ENCODE measurements at regions of chr14 and their contacts with region 1.

Region 1: DNA sequence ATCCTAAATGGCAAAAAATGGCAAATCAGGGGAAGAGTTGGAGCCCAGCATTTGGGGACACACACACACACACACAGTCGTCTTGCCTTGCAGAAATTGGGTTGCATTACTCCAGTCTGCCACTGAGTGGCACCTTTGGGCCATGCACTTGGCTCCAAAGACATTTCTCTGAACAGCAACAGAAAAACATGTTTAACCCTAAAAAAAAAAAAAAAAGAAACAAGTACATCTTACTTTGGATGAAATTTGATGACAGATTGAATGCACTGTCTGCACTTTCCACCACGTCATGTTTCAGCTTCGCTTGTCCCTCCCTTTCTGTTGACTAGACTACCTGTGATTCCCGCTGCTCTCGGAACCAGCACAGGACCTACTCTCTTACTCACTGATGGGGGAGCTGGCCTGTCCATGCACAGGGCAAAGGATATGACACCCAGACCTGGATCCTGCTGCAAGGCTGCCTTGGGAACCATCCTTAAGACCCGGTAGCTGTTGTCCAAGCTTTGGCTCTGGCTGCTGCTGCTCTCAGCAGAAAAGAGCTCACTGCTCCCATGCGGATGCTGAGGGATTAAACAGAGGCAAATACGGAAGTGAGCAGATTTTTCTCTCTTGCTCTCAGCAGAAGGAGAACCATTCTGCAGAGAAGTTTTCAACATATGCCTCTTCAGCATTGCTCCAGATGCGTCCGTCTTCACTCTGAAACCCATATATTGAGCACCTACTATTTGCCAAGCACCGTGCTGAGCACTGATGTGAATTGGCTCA is 376.8 kb downstream of the DPF3 start:
- DNase-seq: peak; percentile 83
- ATAC-seq: no peak
- H3K4me3 Mint-ChIP-seq: no peak overlapping the region
- H3K27ac Mint-ChIP-seq: no peak overlapping the region
- H3K4me1 Mint-ChIP-seq: peaks cover 54% of the 10 kb centered on the region
- H3K27me3 Mint-ChIP-seq: no peaks in the 10 kb centered on the region

Region 2: GRCh38 chr14:72380456-72380855 is 136.7 kb before region 1 on chr14:
- CTCF ChIA-PET with region 1: no interaction called
- POLR2A ChIA-PET with region 1: no interaction called
- intact Hi-C with region 1: no loop called
- DNase-seq: no peak
- ATAC-seq: no peak
- H3K4me3 Mint-ChIP-seq: no peak overlapping the region
- H3K27ac Mint-ChIP-seq: no peak overlapping the region
- H3K4me1 Mint-ChIP-seq: peaks cover 5% of the 10 kb centered on the region
- H3K27me3 Mint-ChIP-seq: peaks cover 14% of the 10 kb centered on the region

Region 3: DNA sequence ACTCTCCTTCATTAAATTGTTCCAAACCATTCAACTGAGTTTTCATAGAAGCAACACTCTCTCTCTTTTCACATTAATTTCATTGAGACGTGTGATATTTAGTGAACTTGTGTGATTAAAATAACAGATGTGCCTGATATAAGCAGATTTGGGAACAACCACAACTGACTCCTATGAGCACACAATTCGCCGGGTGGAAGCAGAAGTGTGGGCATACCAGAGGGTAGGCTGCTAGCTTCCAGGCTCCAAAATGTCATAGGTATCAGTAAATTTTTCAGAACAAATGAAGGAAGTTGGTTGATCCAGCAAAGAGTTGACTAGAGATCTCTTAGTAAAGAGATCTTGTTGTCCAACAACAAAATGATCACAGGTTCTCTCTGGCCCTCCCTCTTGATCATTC is 52.9 kb before region 1 on chr14:
- CTCF ChIA-PET with region 1: no interaction called
- POLR2A ChIA-PET with region 1: no interaction called
- intact Hi-C with region 1: no loop called
- DNase-seq: no peak
- ATAC-seq: no peak
- H3K4me3 Mint-ChIP-seq: no peak overlapping the region
- H3K27ac Mint-ChIP-seq: no peak overlapping the region
- H3K4me1 Mint-ChIP-seq: no peaks in the 10 kb centered on the region
- H3K27me3 Mint-ChIP-seq: no peaks in the 10 kb centered on the region

Region 4: DNA sequence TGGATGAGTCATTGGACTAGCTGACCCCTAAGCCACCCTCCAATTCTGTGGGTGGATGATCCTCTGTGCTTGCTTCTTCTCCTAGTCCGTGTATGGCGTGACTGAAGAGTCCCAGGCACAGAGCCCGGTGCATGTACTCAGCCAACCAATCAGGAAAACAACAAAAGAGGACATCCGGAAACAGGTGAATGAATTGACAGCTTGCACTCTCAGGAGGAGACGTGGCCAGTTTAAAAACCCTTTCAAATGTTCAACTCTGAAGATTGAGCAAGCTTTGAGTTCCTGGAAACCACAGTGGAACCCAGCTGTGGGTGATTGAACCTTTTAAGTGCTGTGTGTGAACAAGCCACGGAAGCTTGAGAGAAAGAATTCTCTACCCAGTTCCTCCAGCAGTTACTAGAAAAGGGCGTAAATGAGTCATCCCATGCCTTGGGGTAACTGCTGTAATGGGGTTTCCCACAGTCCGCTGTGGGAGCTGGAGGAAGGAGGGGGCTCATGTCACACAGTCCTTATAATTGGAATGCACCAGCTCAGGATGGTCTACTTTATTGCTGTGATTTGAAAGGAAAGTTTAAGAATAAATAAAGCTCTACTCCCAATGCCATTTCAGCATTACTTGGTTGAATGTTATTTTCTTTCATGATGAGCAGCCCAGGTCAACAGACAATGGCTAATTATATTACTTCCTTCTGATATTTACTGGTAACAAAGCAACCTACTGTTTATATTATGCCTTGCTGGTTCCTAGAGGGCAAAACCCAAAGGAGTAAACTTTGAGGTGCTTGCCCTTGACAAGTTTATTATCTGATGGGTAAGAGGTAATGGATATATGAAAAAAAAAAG is 40.2 kb before region 1 on chr14:
- CTCF ChIA-PET with region 1: interaction called, 12 read pairs
- POLR2A ChIA-PET with region 1: interaction called, 3 read pairs
- intact Hi-C with region 1: loop called (anchors 1 to 2 kb)
- DNase-seq: peak; percentile 86
- ATAC-seq: peak; percentile 93
- H3K4me3 Mint-ChIP-seq: peak overlapping the region; percentile 35
- H3K27ac Mint-ChIP-seq: peak overlapping the region; percentile 73
- H3K4me1 Mint-ChIP-seq: peaks cover 41% of the 10 kb centered on the region
- H3K27me3 Mint-ChIP-seq: peaks cover 14% of the 10 kb centered on the region

Region 5: DNA sequence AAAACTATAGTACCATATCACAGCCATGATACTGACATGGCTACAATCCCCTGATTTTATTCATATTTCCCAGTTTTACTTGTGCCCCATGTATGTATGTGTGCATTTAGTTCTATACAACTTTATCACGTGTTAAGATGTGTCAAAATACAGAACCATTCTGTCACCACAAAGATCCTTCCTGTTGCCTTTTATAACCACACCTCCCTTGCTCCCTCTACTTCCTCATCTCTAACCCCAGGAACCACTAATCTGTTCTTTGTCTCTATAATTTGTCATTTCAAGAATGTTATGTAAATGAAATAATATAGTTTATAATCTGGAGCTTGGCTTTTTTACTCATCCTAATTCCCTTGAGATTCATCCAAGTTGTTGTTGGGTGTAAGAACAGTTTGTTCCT is 18.4 kb after region 1 on chr14:
- CTCF ChIA-PET with region 1: interaction called, 3 read pairs
- POLR2A ChIA-PET with region 1: no interaction called
- intact Hi-C with region 1: loop called in 1 of 2 experiments (anchors 2 kb)
- DNase-seq: no peak
- ATAC-seq: peak; percentile 74
- H3K4me3 Mint-ChIP-seq: no peak overlapping the region
- H3K27ac Mint-ChIP-seq: no peak overlapping the region
- H3K4me1 Mint-ChIP-seq: peaks cover 35% of the 10 kb centered on the region
- H3K27me3 Mint-ChIP-seq: no peaks in the 10 kb centered on the region

Region 6: DNA sequence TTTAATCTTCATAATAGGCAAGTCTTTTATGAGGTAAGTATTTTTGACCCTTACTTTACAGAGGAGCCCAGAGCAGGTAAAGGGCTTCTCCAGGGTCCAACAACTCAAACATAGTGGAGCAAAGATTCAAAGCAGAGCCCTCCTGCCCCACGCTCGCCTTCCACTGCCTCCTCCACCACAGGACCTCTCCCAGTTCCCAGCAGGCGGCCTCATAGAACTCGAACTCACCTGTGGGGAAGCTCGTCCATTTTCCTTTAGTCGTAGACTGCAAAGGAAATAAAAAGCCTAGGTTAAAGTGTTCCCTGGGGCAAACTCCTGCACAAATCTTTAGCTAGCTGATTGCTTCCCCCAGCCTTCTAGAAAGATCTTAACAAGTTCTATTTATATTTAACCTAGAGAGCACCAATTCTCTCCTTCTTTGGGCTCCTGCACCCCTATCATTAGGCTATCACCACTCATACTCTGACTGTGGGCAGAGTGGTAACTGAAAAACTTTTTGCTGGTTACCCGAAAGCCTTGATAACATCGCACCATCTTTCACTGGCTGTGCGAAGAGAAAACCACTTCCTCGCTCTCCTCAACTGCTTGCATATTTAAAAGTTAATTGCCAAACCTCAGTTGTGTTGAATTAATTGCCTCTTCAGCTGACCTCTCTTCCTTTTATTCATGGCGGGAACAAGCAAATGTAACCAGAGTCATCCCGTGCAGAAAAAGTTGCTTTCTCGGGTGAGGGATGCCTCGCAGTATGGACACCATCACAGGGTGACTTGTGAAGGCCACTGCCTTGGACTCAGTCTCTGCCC is 77.2 kb after region 1 on chr14:
- CTCF ChIA-PET with region 1: interaction called, 3 read pairs
- POLR2A ChIA-PET with region 1: no interaction called
- intact Hi-C with region 1: loop called (anchors 1 to 5 kb)
- DNase-seq: peak; percentile 45
- ATAC-seq: peak; percentile 86
- H3K4me3 Mint-ChIP-seq: peak overlapping the region; percentile 3
- H3K27ac Mint-ChIP-seq: peak overlapping the region; percentile 15
- H3K4me1 Mint-ChIP-seq: peaks cover 43% of the 10 kb centered on the region
- H3K27me3 Mint-ChIP-seq: peaks cover 11% of the 10 kb centered on the region

Region 7: DNA sequence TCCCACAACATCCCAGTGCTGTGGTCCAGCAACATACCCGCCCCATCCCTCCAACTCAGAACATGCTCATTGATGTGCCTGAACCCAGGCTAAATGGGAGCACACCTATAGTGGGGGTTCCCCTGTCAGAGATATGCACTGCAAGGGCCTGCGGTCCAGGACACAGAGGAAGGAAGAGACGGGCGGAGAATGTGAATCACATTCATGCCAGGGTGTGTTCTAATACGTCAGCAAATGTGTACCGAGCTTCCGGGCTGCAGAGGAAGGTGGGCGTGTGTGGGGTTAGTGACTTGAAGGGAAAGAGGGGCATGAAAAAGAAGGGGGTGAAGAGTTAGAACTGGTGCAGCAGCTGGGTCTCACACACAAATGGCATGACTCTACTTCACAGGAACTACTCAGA is 293.1 kb after region 1 on chr14:
- CTCF ChIA-PET with region 1: interaction called, 3 read pairs
- POLR2A ChIA-PET with region 1: no interaction called
- intact Hi-C with region 1: loop called in 1 of 2 experiments (anchors 1 kb)
- DNase-seq: peak; percentile 75
- ATAC-seq: peak; percentile 99
- H3K4me3 Mint-ChIP-seq: no peak overlapping the region
- H3K27ac Mint-ChIP-seq: peak overlapping the region; percentile 81
- H3K4me1 Mint-ChIP-seq: peaks cover 23% of the 10 kb centered on the region
- H3K27me3 Mint-ChIP-seq: no peaks in the 10 kb centered on the region

Region 8: DNA sequence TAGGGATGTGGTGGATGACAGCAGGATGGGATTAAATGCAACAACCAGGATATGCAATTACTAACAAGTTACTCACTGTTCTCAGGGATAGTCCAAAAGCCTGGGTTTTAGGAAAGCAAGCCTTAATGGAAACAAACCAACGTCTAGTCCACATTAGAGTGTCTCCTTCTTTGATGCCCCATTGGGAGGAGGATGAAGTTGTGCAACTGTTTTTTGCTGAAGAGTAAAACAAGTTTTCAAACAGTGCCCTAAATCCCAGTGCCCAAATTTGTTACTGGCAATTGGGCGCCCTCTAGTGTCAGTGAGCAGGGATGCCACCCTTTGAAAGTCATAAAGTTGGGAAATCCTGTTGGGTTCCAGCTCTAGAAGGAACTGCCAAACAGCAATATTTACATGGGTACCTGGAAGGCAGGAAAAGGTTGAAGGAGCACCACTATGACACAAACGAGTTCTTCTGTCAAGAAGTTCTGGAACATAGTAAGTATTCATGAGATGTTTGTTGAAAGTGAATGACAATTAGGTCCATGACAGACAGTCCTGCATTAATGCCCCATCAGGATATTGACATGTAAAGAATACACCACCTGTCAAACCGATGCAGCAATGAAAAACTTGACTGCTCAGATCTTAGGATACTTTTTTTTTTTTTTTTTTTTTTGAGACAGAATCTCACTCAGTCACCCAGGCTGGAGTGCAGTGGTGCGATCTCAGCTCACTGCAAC is 387.9 kb after region 1 on chr14:
- CTCF ChIA-PET with region 1: interaction called, 166 read pairs
- POLR2A ChIA-PET with region 1: interaction called, 6 read pairs
- intact Hi-C with region 1: loop called (anchors 1 kb)
- DNase-seq: peak; percentile 73
- ATAC-seq: peak; percentile 71
- H3K4me3 Mint-ChIP-seq: no peak overlapping the region
- H3K27ac Mint-ChIP-seq: no peak overlapping the region
- H3K4me1 Mint-ChIP-seq: no peaks in the 10 kb centered on the region
- H3K27me3 Mint-ChIP-seq: peaks cover 2% of the 10 kb centered on the region

Region 9: DNA sequence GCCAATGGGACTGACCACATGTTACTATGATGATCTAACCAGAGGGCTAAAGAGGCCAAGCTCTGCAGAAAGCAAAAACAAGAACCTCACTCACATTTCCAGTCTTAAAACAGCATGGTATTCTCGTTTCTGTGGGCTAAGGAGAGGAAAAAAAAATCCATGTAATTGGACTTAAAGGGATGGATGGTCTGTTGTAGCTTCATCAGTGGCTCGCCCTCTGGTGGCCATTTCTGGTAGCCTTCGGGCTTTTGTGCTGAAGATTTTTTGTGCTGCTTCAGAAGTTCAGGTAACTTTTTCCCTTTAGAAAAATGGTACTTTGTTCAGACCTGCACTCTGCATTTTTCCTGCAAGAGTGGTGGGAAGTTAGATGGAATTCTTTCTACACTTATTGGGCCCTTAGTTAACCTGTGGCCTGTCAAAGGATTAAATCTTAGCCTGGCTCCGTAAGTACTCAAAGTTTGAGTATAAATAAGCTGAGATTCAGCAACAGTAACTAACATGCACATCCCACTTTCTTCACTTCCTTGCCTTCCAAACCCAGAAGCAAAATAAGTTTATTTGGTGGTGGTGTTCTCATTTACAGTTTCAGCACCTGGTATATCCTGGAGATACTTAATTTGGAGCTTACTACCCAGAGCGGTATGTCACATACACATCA is 431.5 kb after region 1 on chr14:
- CTCF ChIA-PET with region 1: interaction called, 18 read pairs
- POLR2A ChIA-PET with region 1: no interaction called
- intact Hi-C with region 1: loop called (anchors 1 kb)
- DNase-seq: peak; percentile 81
- ATAC-seq: peak; percentile 44
- H3K4me3 Mint-ChIP-seq: no peak overlapping the region
- H3K27ac Mint-ChIP-seq: no peak overlapping the region
- H3K4me1 Mint-ChIP-seq: peaks cover 5% of the 10 kb centered on the region
- H3K27me3 Mint-ChIP-seq: no peaks in the 10 kb centered on the region